ENCODE measurements at regions of chr1 and their contacts with region 1.

Region 1: DNA sequence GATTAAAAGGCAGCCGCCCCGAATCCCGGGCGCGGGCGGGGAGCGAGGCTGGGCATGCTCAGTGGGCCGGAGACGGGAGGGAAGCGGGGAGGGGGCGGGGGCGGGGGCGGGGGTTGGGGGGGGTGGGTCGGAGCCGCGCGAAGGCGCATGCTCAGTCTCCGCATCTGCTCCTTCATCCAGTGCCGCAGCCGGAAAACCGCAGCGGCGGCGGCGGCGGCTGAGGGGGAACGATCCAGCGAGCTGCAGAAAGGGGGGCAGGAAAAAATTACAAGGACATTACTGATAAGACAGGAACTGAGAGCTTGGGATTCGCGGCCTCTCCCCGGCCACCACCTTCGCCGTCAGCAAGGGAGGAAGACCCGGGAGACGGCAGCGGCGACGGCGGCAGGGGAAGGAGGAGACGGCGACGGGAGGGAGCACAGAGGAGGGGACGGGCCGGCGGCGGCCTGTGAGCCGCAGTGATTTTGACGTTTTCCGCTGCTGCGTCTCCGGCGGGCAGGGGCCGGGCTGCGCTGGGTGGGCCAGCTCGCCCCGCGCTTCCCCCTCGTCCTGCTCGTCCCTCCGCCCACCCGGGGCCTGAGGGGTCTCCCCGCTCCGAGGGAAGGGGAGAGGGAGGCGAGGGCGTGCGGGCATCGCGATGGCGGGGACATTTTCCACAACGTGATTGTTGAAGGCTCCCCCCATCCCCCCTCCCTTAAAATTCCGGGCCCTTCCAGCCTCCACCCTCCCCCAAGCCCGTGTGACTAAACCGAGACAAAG is at the start of gene CAMSAP2:
- DNase-seq: peak; percentile 96
- ATAC-seq: peak; percentile 75
- H3K4me3 ChIP-seq: peak within 1 kb of the TSS; percentile 89
- H3K27ac ChIP-seq: peak within 1 kb of the TSS; percentile 90
- H3K4me1 ChIP-seq: peaks cover 39% of the 10 kb centered on the region
- H3K27me3 ChIP-seq: no peaks in the 10 kb centered on the region
- CTCF ChIP-seq: no peak
- total RNA-seq, gene CAMSAP2: 28.6 and 29.5 TPM in 2 replicates

Region 2: GRCh38 chr1:200724064-200724463 is 14.9 kb before region 1 on chr1:
- CTCF ChIA-PET with region 1: interaction called, 4 read pairs
- POLR2A ChIA-PET with region 1: interaction called, 7 read pairs
- intact Hi-C with region 1: loop called (anchors 1 kb)
- DNase-seq: peak; percentile 95
- ATAC-seq: peak; percentile 100
- H3K4me3 ChIP-seq: no peak overlapping the region
- H3K27ac ChIP-seq: peak overlapping the region; percentile 21
- H3K4me1 ChIP-seq: peaks cover 9% of the 10 kb centered on the region
- H3K27me3 ChIP-seq: no peaks in the 10 kb centered on the region
- CTCF ChIP-seq: no peak

Region 3: GRCh38 chr1:200771619-200772555 is 33.0 kb after region 1 on chr1:
- CTCF ChIA-PET with region 1: interaction called, 5 read pairs
- POLR2A ChIA-PET with region 1: interaction called, 6 read pairs
- intact Hi-C with region 1: loop called (anchors 2 kb)
- DNase-seq: peak; percentile 91
- ATAC-seq: peak; percentile 91
- H3K4me3 ChIP-seq: 0 out of 2 replicates have a peak overlapping the region, but pooled peaks have one; percentile 1
- H3K27ac ChIP-seq: peak overlapping the region; percentile 52
- H3K4me1 ChIP-seq: peaks cover 9% of the 10 kb centered on the region
- H3K27me3 ChIP-seq: no peaks in the 10 kb centered on the region
- CTCF ChIP-seq: no peak